ENCODE measurements at regions of chr12 and their contacts with region 1.

Region 1: GRCh38 chr12:29545102-29545467 is 47.6 kb upstream of the OVCH1 start:
- DNase-seq: no peak
- H3K4me3 ChIP-seq: no peak overlapping the region
- H3K4me1 ChIP-seq: no peaks in the 10 kb centered on the region
- H3K27me3 ChIP-seq: no peaks in the 10 kb centered on the region

Region 2: DNA sequence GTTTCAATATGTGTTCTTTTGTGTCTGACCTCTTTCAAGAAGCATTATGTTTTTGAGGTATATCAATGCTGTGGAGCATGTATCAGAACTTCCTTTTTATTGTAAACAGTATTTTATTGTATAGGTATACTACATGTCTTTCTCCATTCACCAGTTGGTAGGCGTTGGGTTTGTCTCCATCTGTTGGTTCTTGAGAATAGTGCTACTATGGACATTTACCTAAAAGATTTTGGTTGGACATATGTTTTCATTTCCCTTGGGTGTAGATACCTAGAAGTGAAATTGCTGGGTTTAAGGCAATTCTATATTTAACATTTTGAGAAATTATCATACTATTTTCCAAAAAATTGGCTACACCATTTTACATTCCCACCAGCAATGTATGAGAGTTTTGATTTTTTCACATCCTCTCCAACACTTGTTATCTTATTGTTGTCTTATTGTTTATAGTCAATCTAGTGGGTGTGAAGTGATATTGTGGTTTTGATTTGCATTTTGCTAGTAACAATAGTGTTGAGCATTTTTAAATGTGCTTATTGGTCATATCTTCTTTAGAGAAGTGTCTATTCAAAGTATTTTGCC is 741.4 kb after region 1 on chr12:
- in situ Hi-C with region 1: loop called (anchors 25 kb)
- DNase-seq: peak; percentile 37 to 70
- H3K4me3 ChIP-seq: no peak overlapping the region
- H3K4me1 ChIP-seq: no peaks in the 10 kb centered on the region
- H3K27me3 ChIP-seq: no peaks in the 10 kb centered on the region

Region 3: DNA sequence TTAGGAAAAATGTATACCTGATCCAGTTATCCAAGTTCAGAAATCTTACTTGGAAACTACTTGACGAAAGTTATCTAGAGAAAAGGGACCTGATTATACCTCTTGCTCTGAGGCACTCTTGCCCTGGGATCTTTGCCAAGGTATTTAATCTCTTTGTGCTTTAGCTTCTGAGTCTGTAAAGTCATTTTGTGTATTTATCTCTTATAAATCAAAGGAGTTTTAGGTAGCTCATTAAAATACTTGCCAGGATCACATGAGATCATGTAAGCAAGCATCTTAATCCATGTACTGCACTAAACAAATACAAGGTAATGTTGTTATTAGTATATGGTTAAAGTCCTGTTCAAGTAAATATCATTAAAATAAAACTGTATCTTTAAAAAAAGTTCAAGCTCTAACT is 1003.1 kb after region 1 on chr12:
- in situ Hi-C with region 1: no loop called
- DNase-seq: peak in 1 of 2 experiments; percentile 13
- H3K4me3 ChIP-seq: no peak overlapping the region
- H3K4me1 ChIP-seq: no peaks in the 10 kb centered on the region
- H3K27me3 ChIP-seq: peaks cover 5% of the 10 kb centered on the region; the same call in 1 of the 2 replicates